K562 (cell line): ENCODE measurements at regions of chr7 and their contacts with region 1.

Region 1: DNA sequence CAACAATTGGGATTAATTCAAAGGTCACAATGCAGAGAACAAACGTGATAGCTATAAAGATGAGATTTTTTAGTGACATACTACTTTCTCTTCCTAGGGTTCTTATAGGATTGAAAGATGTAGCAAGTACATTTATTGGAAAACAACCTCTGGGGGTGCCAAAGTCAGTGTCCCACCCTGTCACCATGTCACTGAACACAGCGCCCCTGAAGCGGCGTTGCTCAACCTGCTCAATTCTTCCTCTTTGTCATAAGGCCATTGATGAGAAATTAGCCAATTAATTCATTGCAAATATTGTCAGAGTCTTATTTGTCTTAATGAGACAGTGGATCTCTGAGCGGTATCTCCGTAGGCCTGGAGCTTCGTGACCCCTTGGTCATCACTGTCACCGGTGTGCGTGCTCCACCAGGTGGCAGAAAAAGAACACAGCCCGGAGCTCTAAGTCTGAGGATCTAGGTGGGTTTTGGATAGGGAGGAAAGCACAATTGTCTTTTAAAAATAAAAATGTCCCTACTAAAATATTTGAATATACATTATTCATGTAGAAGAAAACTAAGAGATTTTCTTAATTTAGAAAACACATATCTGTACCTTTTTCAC is 362.6 kb downstream of the PAXIP1 start:
- DNase-seq: peak; percentile 74 to 79 (median 76)
- ATAC-seq: peak; percentile 99
- H3K4me3 ChIP-seq: no peak overlapping the region
- H3K27ac ChIP-seq: no peak overlapping the region
- H3K4me1 ChIP-seq: no peaks in the 10 kb centered on the region
- H3K27me3 ChIP-seq: peaks cover 25 to 31% of the 10 kb centered on the region in 2 experiments
- CTCF ChIP-seq: peak; percentile 90 to 98 (median 94)
- EP300 ChIP-seq: no peak
- POLR2A ChIP-seq: no peak
- RAD21 ChIP-seq: peak; percentile 96 to 97

Region 2: GRCh38 chr7:154628556-154628955 is 11.8 kb before region 1 on chr7:
- CTCF ChIA-PET with region 1: no interaction called
- POLR2A ChIA-PET with region 1: interaction called, 15 read pairs
- in situ Hi-C with region 1: no loop called
- intact Hi-C with region 1: no loop called
- DNase-seq: no peak
- ATAC-seq: no peak
- H3K4me3 ChIP-seq: no peak overlapping the region
- H3K27ac ChIP-seq: no peak overlapping the region
- H3K4me1 ChIP-seq: peaks cover 0 to under 1% of the 10 kb centered on the region in 2 experiments; a peak in 1 of 5 replicates
- H3K27me3 ChIP-seq: peaks cover 39 to 51% of the 10 kb centered on the region in 2 experiments
- CTCF ChIP-seq: no peak
- EP300 ChIP-seq: no peak
- POLR2A ChIP-seq: no peak
- RAD21 ChIP-seq: no peak

Region 3: DNA sequence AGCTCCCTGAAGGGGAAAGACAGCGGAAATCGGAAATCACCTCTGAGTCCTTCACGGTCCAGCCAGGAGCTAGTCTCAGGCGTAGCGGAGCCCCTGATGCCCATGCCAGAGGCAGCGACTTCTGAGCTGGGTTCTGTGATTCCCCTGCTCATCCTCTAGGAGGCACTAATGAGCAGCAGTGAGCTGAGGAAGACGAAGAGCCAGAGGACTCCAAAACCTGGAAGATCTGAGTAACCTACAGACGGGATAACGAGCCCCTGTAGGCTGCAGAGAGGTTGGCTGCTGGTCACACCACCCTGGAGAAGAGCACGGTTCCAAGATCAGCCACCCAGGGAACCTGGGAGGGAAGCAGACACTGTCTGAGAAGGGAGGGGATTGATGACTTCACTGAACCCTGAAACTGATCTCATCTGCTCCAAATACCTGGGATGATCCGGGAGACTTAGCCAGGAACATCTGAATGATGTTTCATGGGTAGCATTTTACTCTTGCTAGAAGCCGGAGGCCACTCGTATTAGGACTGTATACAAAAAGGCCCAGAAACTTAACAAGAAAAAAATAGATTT is 58.4 kb after region 1 on chr7:
- CTCF ChIA-PET with region 1: no interaction called
- POLR2A ChIA-PET with region 1: no interaction called
- in situ Hi-C with region 1: no loop called
- intact Hi-C with region 1: loop called (anchors 1 kb)
- DNase-seq: peak; percentile 71 to 84 (median 79)
- ATAC-seq: peak; percentile 83
- H3K4me3 ChIP-seq: no peak overlapping the region
- H3K27ac ChIP-seq: no peak overlapping the region
- H3K4me1 ChIP-seq: peaks cover 3 to 5% of the 10 kb centered on the region in 2 experiments; a peak in 2 of 5 replicates
- H3K27me3 ChIP-seq: peaks cover 0 to 27% of the 10 kb centered on the region in 2 experiments; a peak in 3 of 5 replicates
- CTCF ChIP-seq: peak; percentile 86 to 98 (median 89)
- EP300 ChIP-seq: no peak
- POLR2A ChIP-seq: no peak
- RAD21 ChIP-seq: peak; percentile 35 to 45

Region 4: GRCh38 chr7:154744256-154744860 is 104.0 kb after region 1 on chr7:
- CTCF ChIA-PET with region 1: interaction called, 53 read pairs
- POLR2A ChIA-PET with region 1: no interaction called
- in situ Hi-C with region 1: loop called (anchors 5 kb)
- intact Hi-C with region 1: loop called (anchors 1 kb)
- DNase-seq: peak; percentile 75 to 94 (median 92)
- ATAC-seq: peak; percentile 96
- H3K4me3 ChIP-seq: no peak overlapping the region
- H3K27ac ChIP-seq: no peak overlapping the region
- H3K4me1 ChIP-seq: no peaks in the 10 kb centered on the region
- H3K27me3 ChIP-seq: peaks cover 40 to 65% of the 10 kb centered on the region in 2 experiments
- CTCF ChIP-seq: peak; percentile 93 to 98 (median 94)
- EP300 ChIP-seq: no peak
- POLR2A ChIP-seq: no peak
- RAD21 ChIP-seq: peak; percentile 92 to 95

Region 5: DNA sequence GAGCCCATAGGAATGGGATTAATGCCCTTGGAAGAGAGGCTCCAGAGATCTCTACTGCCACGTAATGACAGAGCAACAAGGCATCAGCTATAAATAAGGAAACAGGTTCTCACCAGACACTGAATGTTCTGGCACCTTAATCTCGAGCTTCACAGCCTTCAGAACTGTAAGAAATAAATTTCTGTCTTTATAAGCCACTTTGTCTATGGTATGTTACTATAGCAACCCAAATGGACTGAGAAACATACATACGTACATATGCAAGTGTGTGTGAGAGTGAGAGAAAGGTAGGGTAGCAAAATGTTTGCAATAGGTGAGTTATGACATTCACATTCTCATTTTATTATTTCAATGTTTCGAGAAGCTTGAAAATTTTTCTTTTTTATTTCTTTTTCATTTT is 407.6 kb after region 1 on chr7:
- CTCF ChIA-PET with region 1: no interaction called
- POLR2A ChIA-PET with region 1: no interaction called
- in situ Hi-C with region 1: no loop called
- intact Hi-C with region 1: no loop called
- DNase-seq: no peak
- ATAC-seq: no peak
- H3K4me3 ChIP-seq: no peak overlapping the region
- H3K27ac ChIP-seq: no peak overlapping the region
- H3K4me1 ChIP-seq: no peaks in the 10 kb centered on the region
- H3K27me3 ChIP-seq: peaks cover 22 to 35% of the 10 kb centered on the region in 2 experiments
- CTCF ChIP-seq: no peak
- EP300 ChIP-seq: no peak
- POLR2A ChIP-seq: no peak
- RAD21 ChIP-seq: no peak